Transverse colon (tissue), 4 donors: ENCODE measurements at regions of chr3 and their contacts with region 1.

Region 1: GRCh38 chr3:188197388-188197847 is 43.5 kb downstream of the LPP start:
- DNase-seq: no peak
- H3K4me3 ChIP-seq: no peak overlapping the region
- H3K27ac ChIP-seq: peak overlapping the region; percentile 45 to 78 (median 70)
- H3K4me1 ChIP-seq: peaks cover 19 to 60% (median 36%) of the 10 kb centered on the region in 4 donors
- H3K27me3 ChIP-seq: no peaks in the 10 kb centered on the region
- CTCF ChIP-seq: no peak
- EP300 ChIP-seq: no peak
- POLR2A ChIP-seq: no peak

Region 2: DNA sequence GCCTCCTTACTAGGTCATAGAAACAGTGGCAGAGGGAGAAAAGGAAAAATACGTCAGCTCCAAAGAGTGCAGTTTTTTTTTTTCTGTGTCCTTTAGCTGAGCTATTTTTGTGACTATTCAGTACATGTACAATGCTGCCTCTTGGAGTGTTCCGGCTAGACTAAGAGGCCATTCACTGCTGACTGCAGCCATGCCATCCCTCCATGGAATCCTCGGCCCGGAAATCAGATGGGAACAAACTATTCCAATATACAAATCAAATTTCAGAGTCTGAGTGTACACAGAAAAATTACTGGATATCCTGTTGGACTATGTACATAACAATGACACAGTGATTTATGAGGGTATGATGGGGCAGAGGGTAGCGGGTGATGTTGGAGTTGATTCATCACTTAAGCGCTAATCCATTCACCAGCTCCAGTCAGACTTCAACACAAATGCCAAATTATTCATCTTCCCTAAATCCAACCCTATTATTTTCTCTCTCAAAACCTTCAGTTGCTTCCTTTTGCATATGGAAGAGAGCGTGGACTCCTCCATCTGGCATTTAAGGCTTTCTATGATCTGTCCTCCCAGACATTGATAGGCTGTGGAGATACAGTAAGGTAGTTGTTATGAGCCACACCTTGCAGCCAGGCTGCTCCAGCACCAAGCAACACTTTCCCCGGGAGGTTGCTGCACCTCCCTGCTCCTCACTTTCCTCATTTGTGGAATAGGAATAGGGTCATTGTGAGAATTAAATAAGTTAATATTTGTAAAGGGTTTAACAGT is 65.7 kb after region 1 on chr3:
- in situ Hi-C with region 1: no loop called
- intact Hi-C with region 1: loop called (anchors 10 kb)
- DNase-seq: no peak
- H3K4me3 ChIP-seq: no peak overlapping the region
- H3K27ac ChIP-seq: peak overlapping the region; percentile 82 to 90 (median 86)
- H3K4me1 ChIP-seq: peaks cover 38 to 98% (median 74%) of the 10 kb centered on the region in 4 donors
- H3K27me3 ChIP-seq: no peaks in the 10 kb centered on the region
- CTCF ChIP-seq: no peak
- EP300 ChIP-seq: peak; percentile 74
- POLR2A ChIP-seq: no peak

Region 3: DNA sequence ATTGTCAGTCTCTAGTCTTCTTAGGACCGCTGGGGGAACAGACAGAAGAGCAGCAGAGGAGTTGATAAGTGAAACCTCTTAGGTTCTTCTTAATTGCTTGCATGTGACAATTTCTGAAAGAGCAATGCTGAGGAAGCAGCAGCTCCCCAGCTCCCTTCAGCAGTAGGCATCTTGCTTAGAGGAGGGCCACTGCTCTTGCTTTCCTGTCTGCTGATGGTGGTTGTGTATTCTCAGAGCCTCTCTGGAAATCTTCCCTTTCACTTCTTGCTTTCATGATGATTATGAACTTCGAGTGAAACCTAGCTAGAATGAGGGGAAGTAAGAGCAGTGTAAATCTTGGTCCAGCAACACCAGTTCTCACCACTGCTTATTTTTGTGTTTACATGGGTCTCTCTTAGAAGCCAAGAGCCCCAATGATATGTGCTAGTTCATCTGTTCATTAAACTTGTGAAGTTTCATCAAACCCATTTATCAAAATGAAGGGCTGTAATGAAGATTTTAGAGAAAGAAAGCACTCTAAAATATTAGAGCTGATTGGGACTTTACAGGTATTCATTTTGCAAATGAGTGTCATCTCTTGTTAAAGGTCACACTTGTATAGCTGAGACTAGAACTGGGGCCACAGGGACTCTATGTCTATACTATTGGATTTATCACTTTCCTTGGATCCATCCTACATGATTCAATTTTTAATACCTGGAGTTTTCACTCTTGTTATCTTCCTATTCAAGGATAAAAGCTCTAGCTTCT is 203.3 kb after region 1 on chr3:
- in situ Hi-C with region 1: no loop called
- intact Hi-C with region 1: no loop called
- DNase-seq: no peak
- H3K4me3 ChIP-seq: no peak overlapping the region
- H3K27ac ChIP-seq: peak overlapping the region in 1 of 4 donors; percentile 24
- H3K4me1 ChIP-seq: peaks cover 22 to 59% (median 27%) of the 10 kb centered on the region in 4 donors
- H3K27me3 ChIP-seq: no peaks in the 10 kb centered on the region
- CTCF ChIP-seq: no peak
- EP300 ChIP-seq: no peak
- POLR2A ChIP-seq: no peak

Region 4: DNA sequence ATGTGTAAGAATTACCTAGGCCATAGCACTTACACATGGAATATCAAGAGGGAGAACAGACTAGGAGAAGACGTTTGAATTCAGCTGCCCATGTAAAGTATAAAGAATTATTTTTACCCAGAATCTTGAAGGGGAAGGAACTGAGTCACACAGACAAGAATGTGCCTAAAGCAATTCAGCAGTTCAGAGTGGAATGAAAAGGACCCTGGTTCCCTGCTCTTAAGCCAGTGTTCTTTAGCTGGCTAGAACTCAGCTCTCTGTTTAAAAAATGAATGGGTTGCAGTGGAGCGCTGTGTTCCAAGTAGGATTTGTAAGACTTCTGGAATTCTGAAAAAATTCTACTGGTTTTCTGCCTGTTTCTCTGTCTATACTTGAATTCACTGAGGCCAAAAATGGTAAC is 396.7 kb after region 1 on chr3:
- in situ Hi-C with region 1: no loop called
- intact Hi-C with region 1: no loop called
- DNase-seq: no peak
- H3K4me3 ChIP-seq: no peak overlapping the region
- H3K27ac ChIP-seq: peak overlapping the region; percentile 30 to 51 (median 40)
- H3K4me1 ChIP-seq: peaks cover 0 to 27% (median 12%) of the 10 kb centered on the region in 4 donors
- H3K27me3 ChIP-seq: no peaks in the 10 kb centered on the region
- CTCF ChIP-seq: no peak
- EP300 ChIP-seq: no peak
- POLR2A ChIP-seq: no peak